Dorsolateral prefrontal cortex (tissue), 120 donors: ENCODE measurements at regions of chrX and their contacts with region 1.

Region 1: DNA sequence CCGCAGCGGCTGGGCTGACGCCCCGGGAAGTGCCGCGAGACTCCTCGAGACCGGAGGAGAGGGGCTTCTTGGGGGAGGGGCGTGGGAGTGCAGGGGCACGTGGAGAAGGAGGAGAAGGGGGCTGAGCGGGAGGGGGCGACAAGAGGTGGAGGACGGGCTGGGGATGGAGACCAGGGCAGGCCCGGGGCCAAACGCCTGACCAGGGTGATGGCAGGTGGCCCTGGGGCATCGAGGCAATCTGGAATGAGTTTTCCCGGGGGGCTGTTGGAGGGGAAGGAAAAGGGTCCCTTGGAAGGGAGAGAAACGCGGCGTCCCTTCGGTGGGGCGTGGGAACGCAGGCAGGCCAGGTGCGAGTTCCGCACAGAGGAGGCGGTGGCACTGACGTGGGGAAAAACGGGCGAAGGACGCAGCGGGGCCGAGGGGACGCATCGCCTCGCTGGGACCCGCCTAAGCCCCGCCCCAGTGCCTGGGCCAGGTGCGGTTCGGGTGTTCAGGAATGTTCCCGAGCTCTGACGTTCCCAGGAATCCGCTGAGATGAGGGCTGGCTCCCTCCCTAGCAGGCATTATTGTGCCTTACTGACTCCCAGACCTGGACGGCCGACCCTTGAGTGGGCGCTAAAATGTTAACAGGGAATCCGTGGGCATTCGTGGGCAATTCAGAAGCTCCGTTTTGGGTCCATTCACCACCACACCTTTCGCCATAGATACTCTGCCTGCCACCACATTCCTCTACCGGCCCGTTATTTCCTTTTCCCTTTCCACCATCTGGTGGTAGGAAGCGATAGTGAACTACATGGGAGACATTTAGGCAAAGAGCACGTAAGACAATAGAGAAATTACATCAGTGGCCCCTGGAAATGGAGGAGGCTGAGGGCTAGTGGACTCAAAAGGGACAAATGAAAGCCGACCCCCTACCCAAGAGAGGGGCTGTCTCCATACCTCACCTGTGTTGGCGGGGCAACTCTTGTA is 795 bp upstream of the SH3KBP1 start:
- DNase-seq: peak in 4 of 10 donors; percentile 35 to 46 (median 44)
- H3K4me3 ChIP-seq: peak overlapping the region; percentile 34 to 81 (median 59)
- H3K27ac ChIP-seq: peak overlapping the region in 50 of 59 donors; percentile 3 to 90 (median 70)
- H3K27me3 ChIP-seq: peaks cover 0 to 40% (median 4%) of the 10 kb centered on the region in 45 donors
- CTCF ChIP-seq: peak in 55 of 56 donors; percentile 0 to 77 (median 58)

Region 2: GRCh38 chrX:19372170-19372546 is 516.0 kb before region 1 on chrX:
- intact Hi-C with region 1: loop called in 1 of 2 experiments (anchors 5 kb)
- DNase-seq: peak in 9 of 10 donors; percentile 38 to 73 (median 58)
- H3K4me3 ChIP-seq: peak overlapping the region; percentile 9 to 69 (median 49)
- H3K27ac ChIP-seq: peak overlapping the region in 2 of 59 donors; percentile 5 to 10
- H3K27me3 ChIP-seq: peaks cover 0 to 48% (median 13%) of the 10 kb centered on the region in 45 donors
- CTCF ChIP-seq: peak; percentile 17 to 76 (median 65)

Region 3: GRCh38 chrX:19544693-19545305 is 343.4 kb before region 1 on chrX:
- intact Hi-C with region 1: loop called (anchors 2 to 5 kb)
- DNase-seq: peak in 3 of 10 donors; percentile 28 to 44 (median 30)
- H3K4me3 ChIP-seq: no peak overlapping the region
- H3K27ac ChIP-seq: peak overlapping the region in 2 of 59 donors; percentile 27 to 36
- H3K27me3 ChIP-seq: peaks cover 0 to 85% (median 7%) of the 10 kb centered on the region in 45 donors
- CTCF ChIP-seq: peak in 55 of 56 donors; percentile 31 to 79 (median 69)

Region 4: GRCh38 chrX:19579485-19579884 is 308.7 kb before region 1 on chrX:
- intact Hi-C with region 1: no loop called
- DNase-seq: no peak
- H3K4me3 ChIP-seq: no peak overlapping the region
- H3K27ac ChIP-seq: no peak overlapping the region
- H3K27me3 ChIP-seq: peaks cover 0 to 56% (median 2%) of the 10 kb centered on the region in 45 donors
- CTCF ChIP-seq: no peak

Region 5: GRCh38 chrX:19673375-19674040 is 214.7 kb before region 1 on chrX:
- intact Hi-C with region 1: loop called in 1 of 2 experiments (anchors 10 kb)
- DNase-seq: peak in 5 of 10 donors; percentile 33 to 64 (median 49)
- H3K4me3 ChIP-seq: no peak overlapping the region
- H3K27ac ChIP-seq: no peak overlapping the region
- H3K27me3 ChIP-seq: peaks cover 0 to 40% (median 4%) of the 10 kb centered on the region in 45 donors
- CTCF ChIP-seq: no peak

Region 6: DNA sequence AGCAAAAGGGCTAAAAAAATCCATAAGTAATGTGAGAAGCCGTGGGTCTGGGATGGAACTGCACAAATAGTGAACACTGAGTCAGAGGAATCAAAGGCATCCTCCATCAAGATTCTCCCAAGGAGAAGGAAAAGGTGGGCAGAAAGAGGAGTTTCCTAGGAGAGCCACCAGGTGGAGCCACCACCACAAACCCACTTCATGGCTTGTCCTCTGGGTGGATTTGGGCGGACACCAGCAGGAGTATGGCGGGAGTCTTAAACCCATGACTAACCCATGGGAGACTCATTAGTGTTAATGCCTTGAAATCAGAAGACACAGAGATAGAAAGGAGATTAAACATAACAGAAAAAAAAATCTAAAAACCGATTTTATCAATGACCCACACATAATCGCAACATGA is 148.5 kb before region 1 on chrX:
- intact Hi-C with region 1: loop called in 1 of 2 experiments (anchors 2 kb)
- DNase-seq: peak in 3 of 10 donors; percentile 6 to 31 (median 10)
- H3K4me3 ChIP-seq: no peak overlapping the region
- H3K27ac ChIP-seq: no peak overlapping the region
- H3K27me3 ChIP-seq: peaks cover 0 to 66% (median 21%) of the 10 kb centered on the region in 45 donors
- CTCF ChIP-seq: peak; percentile 23 to 75 (median 62)

Region 7: GRCh38 chrX:19799319-19800182 is 88.6 kb before region 1 on chrX:
- intact Hi-C with region 1: no loop called
- DNase-seq: peak in 1 of 10 donors; percentile 11
- H3K4me3 ChIP-seq: peak overlapping the region in 5 of 59 donors; percentile 5 to 24 (median 13)
- H3K27ac ChIP-seq: peak overlapping the region in 12 of 59 donors; percentile 2 to 52 (median 34)
- H3K27me3 ChIP-seq: peaks cover 0 to 49% (median 11%) of the 10 kb centered on the region in 45 donors
- CTCF ChIP-seq: no peak

Region 8: DNA sequence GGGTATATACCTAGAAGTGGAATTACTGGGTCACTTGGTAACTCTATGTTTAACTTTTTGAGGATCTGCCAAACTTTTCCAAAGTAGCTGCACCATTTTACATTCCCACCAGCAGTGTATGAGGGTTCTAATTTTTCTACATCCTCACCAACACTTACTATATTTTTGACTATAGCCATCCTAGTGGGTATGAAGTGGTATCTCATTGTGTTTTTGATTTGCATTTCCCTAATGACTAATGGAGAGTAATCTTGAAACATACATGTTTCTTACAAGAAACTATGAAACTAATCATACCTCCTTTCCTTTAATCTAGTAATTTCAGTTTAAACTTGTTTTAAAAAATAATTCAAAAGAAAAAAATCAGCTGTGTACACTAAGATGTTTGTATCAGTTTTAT is 84.8 kb after region 1 on chrX:
- intact Hi-C with region 1: no loop called
- DNase-seq: no peak
- H3K4me3 ChIP-seq: no peak overlapping the region
- H3K27ac ChIP-seq: no peak overlapping the region
- H3K27me3 ChIP-seq: peaks cover 0 to 46% (median 0%) of the 10 kb centered on the region in 45 donors
- CTCF ChIP-seq: no peak